ENCODE measurements at regions of chr14 and their contacts with region 1.

Region 1: DNA sequence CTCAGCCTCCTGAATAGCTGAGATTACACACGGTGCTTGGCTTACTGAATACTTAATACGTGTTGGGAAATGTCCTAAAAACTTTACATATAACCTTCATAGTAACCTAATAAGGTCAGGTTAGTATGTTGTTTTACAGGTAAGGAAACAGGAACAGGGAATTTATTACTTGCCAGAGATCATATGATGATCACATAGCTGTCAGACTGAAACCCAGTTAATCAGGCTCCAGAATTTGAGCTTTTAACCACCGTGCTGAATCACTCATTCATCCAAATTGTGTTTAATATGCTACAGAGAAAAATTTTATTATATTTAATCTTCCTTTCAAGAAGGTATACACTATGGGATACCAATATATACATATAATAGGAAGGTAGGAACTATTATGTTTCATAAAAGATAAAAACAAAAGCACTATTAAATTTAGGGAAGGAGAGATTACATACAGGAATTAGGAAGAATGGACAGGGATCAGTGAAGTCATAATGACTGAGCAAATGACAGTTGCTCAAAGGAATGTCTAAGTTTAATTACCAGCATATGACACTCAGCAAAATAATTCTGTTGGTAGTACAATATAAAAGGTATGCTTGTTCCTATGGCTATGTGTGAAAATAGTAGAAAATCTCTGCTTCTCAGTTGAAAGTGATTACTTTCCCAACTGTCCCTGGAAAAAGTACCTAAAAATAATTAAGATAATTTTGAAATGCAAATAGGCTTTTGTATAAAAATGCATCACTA is 59.3 kb downstream of the HEATR5A start:
- DNase-seq: no peak
- ATAC-seq: no peak
- H3K4me3 Mint-ChIP-seq: no peak overlapping the region
- H3K27ac Mint-ChIP-seq: no peak overlapping the region
- H3K4me1 Mint-ChIP-seq: no peaks in the 10 kb centered on the region
- H3K27me3 Mint-ChIP-seq: no peaks in the 10 kb centered on the region

Region 2: DNA sequence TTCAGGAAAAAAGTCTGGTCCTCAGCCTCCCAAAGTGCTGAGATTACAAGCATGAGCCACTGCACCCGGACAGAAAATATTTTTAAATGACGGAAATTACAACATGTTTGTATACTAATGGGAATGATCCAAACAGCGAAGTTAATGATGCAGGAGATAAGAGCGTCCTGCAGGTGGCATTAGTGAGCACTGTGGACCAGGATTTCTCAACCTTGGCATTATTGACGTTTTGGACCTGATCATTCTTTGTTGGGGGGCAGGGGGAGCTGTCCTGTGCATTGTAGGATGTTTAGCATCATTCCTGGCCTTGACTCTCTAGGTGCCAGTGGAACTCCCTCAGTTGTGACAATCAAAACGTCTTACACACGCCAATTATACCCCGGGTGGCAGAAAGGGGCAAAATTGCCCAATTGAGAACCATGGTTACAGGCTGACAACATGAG is 704.9 kb before region 1 on chr14:
- CTCF ChIA-PET with region 1: no interaction called
- POLR2A ChIA-PET with region 1: no interaction called
- intact Hi-C with region 1: loop called (anchors 1 to 5 kb)
- DNase-seq: peak; percentile 44
- ATAC-seq: no peak
- H3K4me3 Mint-ChIP-seq: no peak overlapping the region
- H3K27ac Mint-ChIP-seq: no peak overlapping the region
- H3K4me1 Mint-ChIP-seq: no peaks in the 10 kb centered on the region
- H3K27me3 Mint-ChIP-seq: no peaks in the 10 kb centered on the region

Region 3: GRCh38 chr14:30982533-30982932 is 378.6 kb before region 1 on chr14:
- CTCF ChIA-PET with region 1: interaction called, 3 read pairs
- POLR2A ChIA-PET with region 1: no interaction called
- intact Hi-C with region 1: loop called in 1 of 2 experiments (anchors 2 kb)
- DNase-seq: no peak
- ATAC-seq: no peak
- H3K4me3 Mint-ChIP-seq: no peak overlapping the region
- H3K27ac Mint-ChIP-seq: no peak overlapping the region
- H3K4me1 Mint-ChIP-seq: peaks cover 12% of the 10 kb centered on the region
- H3K27me3 Mint-ChIP-seq: no peaks in the 10 kb centered on the region

Region 4: GRCh38 chr14:31127690-31128089 is 233.4 kb before region 1 on chr14:
- CTCF ChIA-PET with region 1: no interaction called
- POLR2A ChIA-PET with region 1: no interaction called
- intact Hi-C with region 1: loop called in 1 of 2 experiments (anchors 10 kb)
- DNase-seq: peak; percentile 8
- ATAC-seq: peak; percentile 93
- H3K4me3 Mint-ChIP-seq: no peak overlapping the region
- H3K27ac Mint-ChIP-seq: peak overlapping the region; percentile 1
- H3K4me1 Mint-ChIP-seq: peaks cover 31% of the 10 kb centered on the region
- H3K27me3 Mint-ChIP-seq: no peaks in the 10 kb centered on the region

Region 5: DNA sequence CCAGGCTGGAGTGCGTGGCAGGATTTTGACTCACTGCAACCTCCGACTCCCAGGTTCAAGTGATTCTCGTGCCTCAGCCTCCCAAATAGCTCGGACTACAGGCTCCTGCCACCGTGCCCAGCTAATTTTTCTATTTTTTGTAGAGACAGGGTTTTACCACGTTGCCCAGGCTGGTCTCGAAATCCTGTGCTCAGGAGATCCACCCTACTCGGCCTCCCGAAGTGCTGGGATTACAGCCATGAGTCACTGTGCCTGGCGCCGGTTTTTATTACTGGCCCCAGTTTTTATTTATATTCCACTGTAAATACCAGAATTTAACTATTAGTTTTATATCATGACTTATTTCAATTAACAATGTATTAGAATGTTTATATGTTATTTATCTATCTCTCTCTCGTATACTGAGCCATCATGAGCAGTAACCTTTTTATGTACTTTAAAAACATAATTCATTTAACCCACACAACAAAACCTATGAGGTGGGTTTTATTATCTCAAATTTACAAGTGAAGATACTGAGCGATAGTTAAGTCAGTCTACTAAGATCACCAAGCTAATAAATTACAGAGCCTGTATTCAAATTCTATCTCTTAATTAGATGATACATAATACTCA is 201.3 kb before region 1 on chr14:
- CTCF ChIA-PET with region 1: no interaction called
- POLR2A ChIA-PET with region 1: no interaction called
- intact Hi-C with region 1: loop called in 1 of 2 experiments (anchors 10 kb)
- DNase-seq: no peak
- ATAC-seq: no peak
- H3K4me3 Mint-ChIP-seq: no peak overlapping the region
- H3K27ac Mint-ChIP-seq: no peak overlapping the region
- H3K4me1 Mint-ChIP-seq: no peaks in the 10 kb centered on the region
- H3K27me3 Mint-ChIP-seq: no peaks in the 10 kb centered on the region

Region 6: GRCh38 chr14:31270196-31270772 is 90.8 kb before region 1 on chr14:
- CTCF ChIA-PET with region 1: no interaction called
- POLR2A ChIA-PET with region 1: no interaction called
- intact Hi-C with region 1: loop called in 1 of 2 experiments (anchors 2 kb)
- DNase-seq: peak; percentile 58
- ATAC-seq: no peak
- H3K4me3 Mint-ChIP-seq: no peak overlapping the region
- H3K27ac Mint-ChIP-seq: no peak overlapping the region
- H3K4me1 Mint-ChIP-seq: peaks cover 10% of the 10 kb centered on the region
- H3K27me3 Mint-ChIP-seq: no peaks in the 10 kb centered on the region

Region 7: DNA sequence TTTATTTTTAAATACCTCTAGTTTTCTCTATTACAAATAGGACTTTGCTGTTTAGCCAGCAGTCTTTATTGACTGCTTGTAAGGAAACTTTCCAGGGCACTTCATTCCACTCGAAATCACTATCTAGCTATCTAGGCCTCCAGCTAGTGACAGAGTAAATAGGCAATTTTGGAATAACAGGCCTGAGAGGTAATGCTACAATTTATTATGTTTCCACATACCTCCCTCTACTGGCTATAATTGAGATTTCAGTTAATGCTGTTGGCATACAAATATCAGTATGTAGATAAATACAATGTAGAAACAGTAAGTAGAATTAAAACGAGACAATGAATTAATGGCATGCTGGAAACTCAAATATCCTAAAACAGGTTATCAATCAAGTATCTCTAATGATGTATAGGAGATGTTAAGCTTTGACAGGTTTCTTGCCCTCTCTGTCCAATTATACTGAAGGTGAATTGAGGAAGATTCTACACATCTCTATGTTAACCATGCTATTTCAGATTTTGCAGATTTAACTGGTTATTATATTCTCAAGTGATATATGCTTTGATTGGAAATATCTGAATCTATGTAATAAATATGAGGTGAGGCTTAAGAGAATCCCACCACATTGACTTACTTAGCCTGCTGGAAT is 89.0 kb after region 1 on chr14:
- CTCF ChIA-PET with region 1: no interaction called
- POLR2A ChIA-PET with region 1: no interaction called
- intact Hi-C with region 1: no loop called
- DNase-seq: no peak
- ATAC-seq: no peak
- H3K4me3 Mint-ChIP-seq: no peak overlapping the region
- H3K27ac Mint-ChIP-seq: no peak overlapping the region
- H3K4me1 Mint-ChIP-seq: peaks cover 5% of the 10 kb centered on the region
- H3K27me3 Mint-ChIP-seq: no peaks in the 10 kb centered on the region

Region 8: GRCh38 chr14:31465111-31465510 is 104.0 kb after region 1 on chr14:
- CTCF ChIA-PET with region 1: no interaction called
- POLR2A ChIA-PET with region 1: no interaction called
- intact Hi-C with region 1: no loop called
- DNase-seq: no peak
- ATAC-seq: no peak
- H3K4me3 Mint-ChIP-seq: no peak overlapping the region
- H3K27ac Mint-ChIP-seq: no peak overlapping the region
- H3K4me1 Mint-ChIP-seq: no peaks in the 10 kb centered on the region
- H3K27me3 Mint-ChIP-seq: peaks cover 2% of the 10 kb centered on the region